ENCODE measurements at regions of chr6 and their contacts with region 1.

Region 1: GRCh38 chr6:83067448-83068413 is at the start of gene DOP1A:
- DNase-seq: peak; percentile 91 to 97 (median 95)
- ATAC-seq: peak; percentile 93
- H3K4me3 ChIP-seq: peak within 1 kb of the TSS; percentile 83
- H3K4me3 Mint-ChIP-seq: peak within 1 kb of the TSS; percentile 89 to 96 (median 94)
- H3K27ac ChIP-seq: peak within 1 kb of the TSS; percentile 93
- H3K27ac Mint-ChIP-seq: peak within 1 kb of the TSS; percentile 85 to 97 (median 94)
- H3K4me1 ChIP-seq: peaks cover 16 to 17% of the 10 kb centered on the region in 2 donors
- H3K4me1 Mint-ChIP-seq: peaks cover 21 to 70% (median 57%) of the 10 kb centered on the region in 7 donors
- H3K27me3 ChIP-seq: no peaks in the 10 kb centered on the region
- H3K27me3 Mint-ChIP-seq: no peaks in the 10 kb centered on the region
- total RNA-seq, gene DOP1A: 13.6 to 33.9 (median 25.7) TPM

Region 2: DNA sequence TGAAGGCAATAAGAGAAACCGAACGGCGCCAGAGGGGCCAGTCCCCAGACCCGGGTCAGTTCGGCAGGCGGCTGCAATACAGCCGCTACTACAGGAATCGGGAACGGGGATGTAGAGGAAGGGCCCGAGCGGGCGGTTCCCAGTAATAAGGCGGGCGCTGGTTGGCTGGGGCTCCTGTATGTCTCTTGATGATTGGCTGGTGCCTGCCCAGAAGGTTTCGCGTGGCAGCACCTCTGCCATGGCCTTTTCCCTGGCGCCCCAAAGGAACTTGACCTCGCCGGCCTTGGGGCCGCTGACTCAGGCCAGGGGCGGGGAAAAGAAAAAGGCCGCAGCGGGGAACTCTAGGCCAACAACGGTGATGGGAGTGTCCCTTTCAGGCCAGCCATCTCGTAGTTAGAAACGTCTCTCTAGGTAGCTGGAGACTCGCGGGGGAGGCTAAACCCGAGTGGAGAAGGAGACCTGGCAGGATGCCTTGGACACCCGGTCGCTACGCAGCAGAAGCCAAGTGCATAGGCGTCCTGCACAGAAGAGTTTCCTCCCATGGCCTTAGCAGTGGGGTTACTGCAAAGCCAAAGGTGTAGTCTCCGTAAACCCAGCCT is 820.0 kb before region 1 on chr6 and contains the start of gene IBTK:
- CTCF ChIA-PET with region 1: interaction called, 3 read pairs
- POLR2A ChIA-PET with region 1: interaction called, 3 read pairs
- intact Hi-C with region 1: loop called (anchors 1 kb)
- DNase-seq: peak; percentile 86 to 97 (median 92)
- ATAC-seq: peak; percentile 97
- H3K4me3 ChIP-seq: peak within 1 kb of the TSS; percentile 87
- H3K4me3 Mint-ChIP-seq: peak within 1 kb of the TSS; percentile 92 to 99 (median 98)
- H3K27ac ChIP-seq: peak within 1 kb of the TSS; percentile 85
- H3K27ac Mint-ChIP-seq: peak within 1 kb of the TSS; percentile 93 to 99 (median 97)
- H3K4me1 ChIP-seq: peaks cover 12 to 15% of the 10 kb centered on the region in 2 donors
- H3K4me1 Mint-ChIP-seq: peaks cover 20 to 51% (median 42%) of the 10 kb centered on the region in 7 donors
- H3K27me3 ChIP-seq: no peaks in the 10 kb centered on the region
- H3K27me3 Mint-ChIP-seq: no peaks in the 10 kb centered on the region
- total RNA-seq, gene IBTK: 16.6 to 35.8 (median 26.1) TPM

Region 3: DNA sequence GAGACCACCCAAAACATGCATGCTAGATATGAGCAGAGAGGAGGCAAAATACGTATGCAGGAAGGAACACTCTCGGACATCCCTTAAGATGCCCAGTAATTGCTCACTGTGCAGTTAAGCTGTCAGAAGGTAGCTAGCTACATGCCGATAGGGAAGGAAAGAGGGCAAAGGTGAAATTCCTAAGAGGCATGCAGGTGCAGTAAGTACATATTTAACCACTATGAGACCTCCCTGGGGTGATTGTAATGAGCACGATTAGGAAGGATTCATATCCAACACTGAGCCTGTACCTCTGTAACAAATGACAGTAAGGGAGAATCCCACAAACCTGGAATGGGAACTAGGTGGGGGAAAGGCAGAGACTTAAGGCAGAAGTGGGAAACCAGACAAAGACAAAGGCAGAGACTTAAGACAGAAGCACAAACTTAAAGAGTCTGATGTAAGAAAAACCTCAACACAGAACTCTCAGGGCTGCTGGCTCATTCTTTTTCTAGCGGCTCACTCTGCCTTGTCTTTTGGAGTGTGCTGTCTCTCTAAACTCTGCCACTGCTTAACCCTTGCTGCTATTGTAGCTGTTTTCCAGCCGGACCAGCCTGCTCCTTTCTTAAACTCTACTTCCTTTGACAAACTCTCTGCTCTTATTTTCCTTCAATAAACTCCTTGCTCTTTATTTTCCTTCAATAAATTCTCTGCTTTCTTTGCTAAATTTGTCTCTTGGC is 150.2 kb before region 1 on chr6:
- CTCF ChIA-PET with region 1: no interaction called
- POLR2A ChIA-PET with region 1: no interaction called
- intact Hi-C with region 1: no loop called
- DNase-seq: no peak
- ATAC-seq: no peak
- H3K4me3 ChIP-seq: no peak overlapping the region
- H3K4me3 Mint-ChIP-seq: no peak overlapping the region
- H3K27ac ChIP-seq: no peak overlapping the region
- H3K27ac Mint-ChIP-seq: peak overlapping the region in 1 of 9 donors; percentile 59
- H3K4me1 ChIP-seq: no peaks in the 10 kb centered on the region
- H3K4me1 Mint-ChIP-seq: peaks cover 0 to 5% (median 0%) of the 10 kb centered on the region in 7 donors
- H3K27me3 ChIP-seq: no peaks in the 10 kb centered on the region
- H3K27me3 Mint-ChIP-seq: no peaks in the 10 kb centered on the region

Region 4: DNA sequence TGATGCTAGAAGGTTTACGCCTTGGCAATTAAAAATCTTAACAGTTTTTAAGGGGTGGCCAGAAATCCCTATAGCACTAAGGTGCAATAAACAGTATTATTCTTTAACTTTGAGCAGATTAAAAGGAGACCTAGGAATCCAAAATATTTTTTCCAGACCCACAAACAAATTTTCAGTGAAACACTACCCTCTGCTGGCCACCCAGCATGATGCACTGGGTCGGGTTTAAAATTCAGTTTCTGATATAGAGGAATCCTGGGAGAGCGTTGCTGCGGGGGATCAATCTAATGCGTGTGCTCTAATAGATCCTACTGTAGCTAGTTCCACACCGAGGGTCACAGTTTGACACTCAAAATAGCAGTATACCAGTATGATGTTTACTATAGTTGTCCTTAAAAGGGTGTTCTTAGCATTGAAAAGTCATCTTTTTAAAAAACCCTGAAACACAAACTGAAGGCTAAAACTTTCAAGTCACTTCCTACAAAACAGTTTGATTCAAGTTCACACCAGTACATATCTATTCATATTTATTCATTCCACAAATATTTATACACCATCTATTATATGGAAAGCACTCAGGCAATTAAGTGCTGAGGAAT is 12.3 kb before region 1 on chr6:
- CTCF ChIA-PET with region 1: interaction called, 13 read pairs
- POLR2A ChIA-PET with region 1: interaction called, 4 read pairs
- intact Hi-C with region 1: loop called in 1 of 2 experiments (anchors 1 kb)
- DNase-seq: peak in 5 of 9 donors; percentile 18 to 44 (median 39)
- ATAC-seq: peak; percentile 78
- H3K4me3 ChIP-seq: no peak overlapping the region
- H3K4me3 Mint-ChIP-seq: no peak overlapping the region
- H3K27ac ChIP-seq: no peak overlapping the region
- H3K27ac Mint-ChIP-seq: no peak overlapping the region
- H3K4me1 ChIP-seq: no peaks in the 10 kb centered on the region
- H3K4me1 Mint-ChIP-seq: peaks cover 0 to 9% (median 5%) of the 10 kb centered on the region in 7 donors
- H3K27me3 ChIP-seq: no peaks in the 10 kb centered on the region
- H3K27me3 Mint-ChIP-seq: no peaks in the 10 kb centered on the region

Region 5: DNA sequence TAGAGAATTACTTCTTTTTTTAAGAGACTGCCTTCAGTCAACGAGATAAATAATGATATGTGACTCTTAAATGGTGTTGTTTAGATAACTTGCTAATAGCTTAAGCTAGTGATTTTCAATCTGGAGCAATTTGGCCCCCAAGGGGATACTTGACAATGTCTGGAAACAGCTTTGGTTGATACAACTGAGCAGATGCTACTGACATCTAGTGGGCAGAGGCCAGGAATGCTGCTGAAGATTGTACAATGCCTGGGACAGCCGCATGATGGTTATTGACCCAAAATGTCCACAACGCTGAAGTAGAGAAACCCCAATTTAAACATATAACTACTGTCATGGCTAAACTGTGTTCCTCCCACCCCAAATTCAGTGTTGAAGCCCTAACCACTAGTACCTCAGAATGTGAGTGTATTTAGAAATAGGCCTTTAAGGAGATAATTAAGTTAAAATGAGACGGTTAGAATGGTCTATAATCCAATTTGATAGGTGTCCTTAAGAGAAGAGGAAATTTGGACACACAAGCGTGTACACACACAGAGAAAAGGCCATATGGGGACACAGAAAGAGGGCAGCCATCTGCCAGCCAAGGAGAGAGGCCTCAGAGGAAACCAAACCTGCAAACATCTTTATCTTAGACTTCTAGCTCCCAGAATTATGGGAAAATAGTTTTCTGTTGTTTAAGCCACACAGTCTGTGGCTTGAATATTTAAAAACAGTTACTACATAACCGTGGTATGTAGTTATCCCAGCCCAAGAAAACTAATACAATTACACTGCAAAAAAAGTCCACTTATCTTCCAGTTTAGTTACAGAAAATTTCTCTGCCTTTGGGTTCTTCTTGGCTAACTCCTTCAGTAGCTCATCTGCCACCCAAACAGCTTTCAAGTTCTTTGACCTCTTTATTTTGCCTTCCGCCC is 147.7 kb after region 1 on chr6:
- CTCF ChIA-PET with region 1: interaction called, 36 read pairs
- POLR2A ChIA-PET with region 1: interaction called, 4 read pairs
- intact Hi-C with region 1: loop called (anchors 1 kb)
- DNase-seq: peak; percentile 8 to 56 (median 38)
- ATAC-seq: peak; percentile 98
- H3K4me3 ChIP-seq: no peak overlapping the region
- H3K4me3 Mint-ChIP-seq: no peak overlapping the region
- H3K27ac ChIP-seq: no peak overlapping the region
- H3K27ac Mint-ChIP-seq: no peak overlapping the region
- H3K4me1 ChIP-seq: no peaks in the 10 kb centered on the region
- H3K4me1 Mint-ChIP-seq: no peaks in the 10 kb centered on the region
- H3K27me3 ChIP-seq: no peaks in the 10 kb centered on the region
- H3K27me3 Mint-ChIP-seq: peaks cover 8 to 29% (median 12%) of the 10 kb centered on the region in 5 donors

Region 6: DNA sequence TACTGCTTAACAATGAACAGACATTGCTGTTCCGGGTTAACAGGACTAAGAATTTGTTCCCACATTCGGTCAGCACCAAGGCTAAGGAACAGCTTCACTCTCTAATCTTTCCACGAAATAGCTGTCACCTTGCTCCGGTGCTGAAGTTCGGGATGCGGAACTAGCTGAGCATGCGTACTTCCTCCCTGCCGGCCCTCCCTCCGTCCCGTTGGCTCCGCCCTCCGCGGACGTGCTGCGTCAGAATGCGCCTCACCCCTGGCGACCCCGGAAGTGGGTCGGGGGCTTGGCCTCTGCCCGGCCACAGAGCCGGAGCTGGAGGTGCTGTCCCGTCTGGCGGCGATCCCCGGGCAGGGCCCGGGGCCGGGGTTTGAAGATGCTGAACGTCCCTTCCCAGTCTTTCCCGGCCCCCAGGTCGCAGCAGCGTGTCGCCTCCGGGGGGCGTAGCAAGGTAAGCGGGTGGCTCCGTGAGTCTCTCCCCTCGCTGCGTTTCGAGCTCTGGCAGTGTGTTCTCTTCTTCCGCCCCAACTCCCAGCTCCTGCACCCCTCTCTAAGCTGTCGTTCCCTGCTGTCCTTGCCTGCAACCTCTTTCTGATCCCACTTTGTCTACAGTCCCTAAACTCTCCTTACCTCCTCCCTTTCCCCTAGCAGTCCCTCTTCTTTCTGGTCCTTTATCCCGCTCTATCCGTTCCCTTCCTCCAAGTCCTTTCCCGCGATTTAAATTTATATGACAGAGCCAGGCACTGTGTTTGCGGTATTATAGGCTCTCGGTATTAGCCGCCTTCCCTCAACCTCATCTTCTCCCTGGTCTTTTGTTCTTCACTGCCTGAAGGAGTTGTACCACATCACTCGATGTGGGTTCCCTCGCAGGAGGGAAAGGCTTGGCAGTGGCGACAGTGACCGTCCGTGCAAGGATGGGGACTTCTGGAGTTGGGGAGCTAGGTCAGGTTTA is 792.0 kb after region 1 on chr6 and contains the start of gene CYB5R4:
- CTCF ChIA-PET with region 1: no interaction called
- POLR2A ChIA-PET with region 1: no interaction called
- intact Hi-C with region 1: loop called (anchors 1 to 5 kb)
- DNase-seq: peak; percentile 88 to 95 (median 94)
- ATAC-seq: peak; percentile 98
- H3K4me3 ChIP-seq: peak within 1 kb of the TSS; percentile 92
- H3K4me3 Mint-ChIP-seq: peak within 1 kb of the TSS; percentile 87 to 100 (median 98)
- H3K27ac ChIP-seq: peak within 1 kb of the TSS; percentile 82
- H3K27ac Mint-ChIP-seq: peak within 1 kb of the TSS; percentile 85 to 96 (median 91)
- H3K4me1 ChIP-seq: peaks cover 14 to 21% of the 10 kb centered on the region in 2 donors
- H3K4me1 Mint-ChIP-seq: peaks cover 23 to 47% (median 37%) of the 10 kb centered on the region in 7 donors
- H3K27me3 ChIP-seq: no peaks in the 10 kb centered on the region
- H3K27me3 Mint-ChIP-seq: peaks cover 8 to 18% (median 16%) of the 10 kb centered on the region in 5 donors
- total RNA-seq, gene CYB5R4: 17.8 to 38.6 (median 21.0) TPM

Measured in naive thymus-derived CD4-positive, alpha-beta T cell (primary cell).